ENCODE measurements at regions of chr16 and their contacts with region 1.

Region 1: GRCh38 chr16:48623304-48624016 is 13.5 kb upstream of the N4BP1 start:
- DNase-seq: peak; percentile 82
- ATAC-seq: peak; percentile 95
- H3K4me3 Mint-ChIP-seq: peak overlapping the region; percentile 69
- H3K27ac Mint-ChIP-seq: peak overlapping the region; percentile 66
- H3K4me1 Mint-ChIP-seq: peaks cover 28% of the 10 kb centered on the region
- H3K27me3 Mint-ChIP-seq: no peaks in the 10 kb centered on the region
- CTCF ChIP-seq: peak; percentile 95

Region 2: DNA sequence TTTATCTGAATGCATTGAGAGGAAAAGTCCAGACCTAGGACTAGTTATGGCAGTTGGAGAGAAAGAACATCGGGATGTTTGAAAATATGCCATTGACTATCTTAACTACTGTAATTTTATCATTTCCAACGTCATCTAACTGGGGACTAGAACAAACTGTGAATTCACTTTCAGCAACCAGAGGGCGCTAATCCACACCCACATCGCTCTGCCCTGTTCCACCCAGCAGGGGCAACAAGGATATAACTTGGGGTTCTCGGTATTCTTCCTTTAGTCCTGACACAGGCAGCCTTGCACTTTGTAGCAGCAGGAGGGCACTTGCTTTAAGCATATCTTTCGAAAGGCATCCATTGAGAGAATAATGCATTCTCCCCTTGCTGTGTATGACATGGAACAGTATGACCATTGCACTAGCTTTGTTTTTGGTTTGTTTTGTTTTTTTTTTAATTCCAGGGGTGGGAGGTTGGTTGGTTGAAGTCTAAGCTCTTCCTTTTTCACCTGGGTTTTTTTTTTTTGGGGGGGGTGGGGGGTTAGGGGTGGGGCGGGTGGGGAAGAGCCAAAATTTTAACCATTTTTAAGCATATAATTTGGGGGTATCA is 269.8 kb before region 1 on chr16:
- CTCF ChIA-PET with region 1: interaction called, 24 read pairs
- POLR2A ChIA-PET with region 1: interaction called, 4 read pairs
- intact Hi-C with region 1: loop called (anchors 1 kb)
- DNase-seq: peak; percentile 76
- ATAC-seq: peak; percentile 81
- H3K4me3 Mint-ChIP-seq: peak overlapping the region; percentile 21
- H3K27ac Mint-ChIP-seq: peak overlapping the region; percentile 73
- H3K4me1 Mint-ChIP-seq: peaks cover 18% of the 10 kb centered on the region
- H3K27me3 Mint-ChIP-seq: no peaks in the 10 kb centered on the region
- CTCF ChIP-seq: peak; percentile 92

Region 3: DNA sequence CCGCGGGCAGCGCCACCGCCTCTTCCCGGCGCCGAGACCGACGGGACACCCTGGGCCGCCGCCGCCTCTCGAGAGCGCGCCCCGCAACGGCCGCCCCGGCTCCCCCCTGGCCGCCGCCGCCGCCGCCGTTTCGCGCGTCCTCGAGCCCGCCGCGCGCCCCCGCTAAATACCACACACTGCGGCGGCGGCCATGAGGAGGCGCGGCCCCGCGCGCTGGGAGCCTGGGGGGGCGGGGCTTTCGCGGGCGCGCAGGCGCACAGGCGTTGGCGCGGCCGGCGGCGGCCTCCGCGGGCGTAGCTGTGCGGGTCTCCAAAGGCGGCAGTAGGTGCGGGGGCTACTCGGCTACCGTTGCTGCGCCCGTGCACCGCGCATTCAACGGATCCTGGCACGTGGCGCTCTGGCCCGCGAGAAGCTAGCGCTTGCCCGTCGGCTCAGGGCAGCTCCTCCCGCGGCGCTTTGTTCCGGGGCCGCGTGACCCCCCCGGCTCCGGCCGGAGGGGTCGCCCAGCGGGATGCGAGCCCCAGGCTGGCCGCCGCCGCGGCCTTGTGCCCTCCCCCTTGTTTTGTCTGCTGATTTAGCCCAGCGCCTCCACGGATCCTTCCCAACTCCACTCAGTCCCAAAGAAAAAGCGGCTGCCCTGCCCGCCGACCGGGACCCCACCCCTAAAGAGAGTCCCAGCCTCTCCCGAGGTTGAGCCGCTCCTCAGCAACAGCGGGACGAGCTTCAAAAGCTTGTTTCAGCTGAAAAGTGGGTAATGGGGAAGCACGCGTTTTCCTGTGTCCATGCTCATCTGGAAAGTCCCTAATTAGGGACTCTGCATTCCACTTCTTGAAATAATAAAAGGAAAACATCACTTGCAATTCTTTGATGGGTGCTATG is 237.9 kb before region 1 on chr16 and contains the start of gene SIAH1:
- CTCF ChIA-PET with region 1: interaction called, 19 read pairs
- POLR2A ChIA-PET with region 1: interaction called, 6 read pairs
- intact Hi-C with region 1: no loop called
- DNase-seq: peak; percentile 84
- ATAC-seq: peak; percentile 87
- H3K4me3 Mint-ChIP-seq: peak within 1 kb of the TSS; percentile 91
- H3K27ac Mint-ChIP-seq: peak within 1 kb of the TSS; percentile 91
- H3K4me1 Mint-ChIP-seq: peaks cover 18% of the 10 kb centered on the region
- H3K27me3 Mint-ChIP-seq: no peaks in the 10 kb centered on the region
- CTCF ChIP-seq: no peak
- total RNA-seq, gene SIAH1: 13.3 to 14.3 TPM

Region 4: DNA sequence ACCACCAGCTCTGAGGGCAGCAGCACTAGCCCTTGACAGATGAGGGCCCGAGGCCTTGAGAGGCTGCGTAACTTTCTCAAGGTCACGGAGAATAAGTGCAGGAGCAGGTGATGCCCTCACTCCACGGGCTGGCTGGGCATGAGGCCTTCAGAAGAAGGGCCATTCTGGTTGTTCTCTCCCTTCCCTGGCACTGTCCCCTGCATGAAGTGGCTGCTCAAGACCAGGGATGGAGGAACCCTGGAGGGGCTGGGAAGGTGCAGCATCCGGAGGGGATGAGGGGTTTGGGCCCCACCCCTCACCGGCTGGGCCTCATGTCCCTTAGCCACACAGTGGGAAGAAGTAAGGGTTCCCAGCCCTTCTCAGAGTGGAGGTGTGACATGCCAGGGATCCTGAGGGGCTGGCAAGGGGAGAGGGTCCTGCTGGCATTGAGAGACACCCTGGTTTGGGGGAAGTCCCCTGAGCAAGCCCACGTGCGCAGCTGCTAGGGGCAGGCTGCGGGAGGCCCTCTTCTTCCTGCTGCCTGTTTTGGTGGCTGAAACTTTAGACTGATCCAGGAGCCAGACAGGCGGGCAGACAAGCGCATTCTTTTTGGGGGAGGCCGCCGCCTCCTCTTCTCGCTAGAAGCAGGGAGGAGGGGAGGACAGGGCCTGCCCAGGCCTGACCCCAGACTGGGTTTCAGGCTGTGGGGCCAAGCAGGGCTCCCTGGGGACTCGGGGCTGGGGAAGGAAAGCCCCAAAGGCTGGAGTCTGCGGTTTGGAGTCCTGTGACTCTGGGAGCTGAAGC is 87.4 kb before region 1 on chr16:
- CTCF ChIA-PET with region 1: interaction called, 68 read pairs
- POLR2A ChIA-PET with region 1: no interaction called
- intact Hi-C with region 1: no loop called
- DNase-seq: peak; percentile 55
- ATAC-seq: peak; percentile 60
- H3K4me3 Mint-ChIP-seq: no peak overlapping the region
- H3K27ac Mint-ChIP-seq: peak overlapping the region; percentile 58
- H3K4me1 Mint-ChIP-seq: peaks cover 19% of the 10 kb centered on the region
- H3K27me3 Mint-ChIP-seq: no peaks in the 10 kb centered on the region
- CTCF ChIP-seq: no peak

Region 5: DNA sequence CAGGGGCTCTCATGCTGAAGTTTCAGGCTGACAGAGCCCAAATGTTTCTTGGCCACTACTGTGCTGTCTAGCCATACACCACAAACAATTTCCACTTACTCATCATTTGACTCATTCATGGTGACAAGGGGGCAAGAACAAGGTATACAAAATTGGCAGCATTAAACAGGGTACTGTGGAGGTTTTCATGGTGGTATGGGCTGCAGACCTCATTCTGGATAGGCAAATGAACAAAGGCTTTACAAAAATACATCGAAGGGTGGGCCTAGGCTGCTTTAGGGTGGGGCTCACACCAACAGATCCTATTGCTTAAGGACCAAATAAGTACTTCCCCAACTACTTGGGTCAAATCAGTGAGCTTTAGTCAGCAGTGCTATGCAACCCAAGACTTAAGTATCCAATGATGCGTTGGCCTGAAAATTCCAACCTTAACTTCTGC is 66.5 kb before region 1 on chr16:
- CTCF ChIA-PET with region 1: interaction called, 32 read pairs
- POLR2A ChIA-PET with region 1: interaction called, 4 read pairs
- intact Hi-C with region 1: no loop called
- DNase-seq: peak; percentile 66
- ATAC-seq: peak; percentile 79
- H3K4me3 Mint-ChIP-seq: no peak overlapping the region
- H3K27ac Mint-ChIP-seq: peak overlapping the region; percentile 91
- H3K4me1 Mint-ChIP-seq: peaks cover 85% of the 10 kb centered on the region
- H3K27me3 Mint-ChIP-seq: no peaks in the 10 kb centered on the region
- CTCF ChIP-seq: no peak

Region 6: GRCh38 chr16:48609652-48610029 is 13.8 kb before region 1 on chr16:
- CTCF ChIA-PET with region 1: interaction called, 71 read pairs
- POLR2A ChIA-PET with region 1: interaction called, 10 read pairs
- intact Hi-C with region 1: no loop called
- DNase-seq: peak; percentile 63
- ATAC-seq: peak; percentile 34
- H3K4me3 Mint-ChIP-seq: no peak overlapping the region
- H3K27ac Mint-ChIP-seq: peak overlapping the region; percentile 95
- H3K4me1 Mint-ChIP-seq: peaks cover 41% of the 10 kb centered on the region
- H3K27me3 Mint-ChIP-seq: no peaks in the 10 kb centered on the region
- CTCF ChIP-seq: no peak